IMR-90 (cell line): ENCODE measurements at regions of chr7 and their contacts with region 1.

Region 1: GRCh38 chr7:13742811-13743210 is 246.7 kb downstream of the ETV1 start:
- DNase-seq: peak; percentile 56
- ATAC-seq: peak; percentile 90
- H3K4me3 ChIP-seq: no peak overlapping the region
- H3K27ac ChIP-seq: no peak overlapping the region
- H3K4me1 ChIP-seq: peaks cover 2% of the 10 kb centered on the region
- H3K27me3 ChIP-seq: no peaks in the 10 kb centered on the region
- CTCF ChIP-seq: peak; percentile 50
- POLR2A ChIP-seq: no peak
- RAD21 ChIP-seq: peak; percentile 44

Region 2: DNA sequence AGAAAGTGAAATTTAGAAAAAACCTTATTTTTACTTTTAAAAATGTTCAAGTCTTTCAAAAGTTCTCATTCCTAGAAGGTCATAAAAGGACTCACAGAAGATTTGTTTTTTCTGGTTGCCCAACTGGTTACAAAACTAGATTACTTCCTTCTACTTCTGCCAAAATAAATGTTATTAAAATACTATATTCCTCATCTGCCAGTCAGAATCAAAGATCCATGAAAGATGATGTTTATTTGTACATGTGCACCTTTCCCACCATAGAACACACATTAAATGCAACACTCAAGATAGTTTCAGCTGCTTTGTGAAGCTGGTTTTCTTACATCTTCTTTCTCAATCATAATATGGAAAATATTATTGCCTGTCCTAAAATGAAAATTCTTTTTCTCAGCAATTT is 218.7 kb before region 1 on chr7:
- CTCF ChIA-PET with region 1: interaction called, 6 read pairs
- POLR2A ChIA-PET with region 1: no interaction called
- dilution Hi-C with region 1: no loop called
- in situ Hi-C with region 1: no loop called
- intact Hi-C with region 1: loop called (anchors 2 kb)
- DNase-seq: no peak
- ATAC-seq: no peak
- H3K4me3 ChIP-seq: no peak overlapping the region
- H3K27ac ChIP-seq: no peak overlapping the region
- H3K4me1 ChIP-seq: no peaks in the 10 kb centered on the region
- H3K27me3 ChIP-seq: no peaks in the 10 kb centered on the region
- CTCF ChIP-seq: no peak
- POLR2A ChIP-seq: no peak
- RAD21 ChIP-seq: no peak

Region 3: GRCh38 chr7:14332155-14332554 is 589.3 kb after region 1 on chr7:
- CTCF ChIA-PET with region 1: no interaction called
- POLR2A ChIA-PET with region 1: no interaction called
- dilution Hi-C with region 1: no loop called
- in situ Hi-C with region 1: no loop called
- intact Hi-C with region 1: loop called (anchors 10 kb)
- DNase-seq: peak; percentile 10
- ATAC-seq: no peak
- H3K4me3 ChIP-seq: no peak overlapping the region
- H3K27ac ChIP-seq: no peak overlapping the region
- H3K4me1 ChIP-seq: no peaks in the 10 kb centered on the region
- H3K27me3 ChIP-seq: no peaks in the 10 kb centered on the region
- CTCF ChIP-seq: no peak
- POLR2A ChIP-seq: no peak
- RAD21 ChIP-seq: no peak